H1 (cell line): ENCODE measurements at regions of chr11 and their contacts with region 1.

Region 1: GRCh38 chr11:46520971-46521745 is 72.7 kb downstream of the AMBRA1 start:
- DNase-seq: no peak
- H3K4me3 ChIP-seq: no peak overlapping the region
- H3K27ac ChIP-seq: no peak overlapping the region
- H3K4me1 ChIP-seq: peaks cover 0 to 10% (median 6%) of the 10 kb centered on the region in 4 experiments; a peak in 3 of 7 replicates
- H3K27me3 ChIP-seq: no peaks in the 10 kb centered on the region
- CTCF ChIP-seq: no peak
- EP300 ChIP-seq: no peak
- POLR2A ChIP-seq: no peak
- RAD21 ChIP-seq: no peak

Region 2: GRCh38 chr11:46504817-46505613 is 16.1 kb before region 1 on chr11:
- CTCF ChIA-PET with region 1: interaction called, 10 read pairs
- POLR2A ChIA-PET with region 1: no interaction called
- DNase-seq: no peak
- H3K4me3 ChIP-seq: no peak overlapping the region
- H3K27ac ChIP-seq: no peak overlapping the region
- H3K4me1 ChIP-seq: peaks cover 2 to 10% (median 5%) of the 10 kb centered on the region in 4 experiments; a peak in 5 of 7 replicates
- H3K27me3 ChIP-seq: no peaks in the 10 kb centered on the region
- CTCF ChIP-seq: no peak
- EP300 ChIP-seq: no peak
- POLR2A ChIP-seq: no peak
- RAD21 ChIP-seq: no peak